ENCODE measurements at regions of chr17 and their contacts with region 1.

Region 1: DNA sequence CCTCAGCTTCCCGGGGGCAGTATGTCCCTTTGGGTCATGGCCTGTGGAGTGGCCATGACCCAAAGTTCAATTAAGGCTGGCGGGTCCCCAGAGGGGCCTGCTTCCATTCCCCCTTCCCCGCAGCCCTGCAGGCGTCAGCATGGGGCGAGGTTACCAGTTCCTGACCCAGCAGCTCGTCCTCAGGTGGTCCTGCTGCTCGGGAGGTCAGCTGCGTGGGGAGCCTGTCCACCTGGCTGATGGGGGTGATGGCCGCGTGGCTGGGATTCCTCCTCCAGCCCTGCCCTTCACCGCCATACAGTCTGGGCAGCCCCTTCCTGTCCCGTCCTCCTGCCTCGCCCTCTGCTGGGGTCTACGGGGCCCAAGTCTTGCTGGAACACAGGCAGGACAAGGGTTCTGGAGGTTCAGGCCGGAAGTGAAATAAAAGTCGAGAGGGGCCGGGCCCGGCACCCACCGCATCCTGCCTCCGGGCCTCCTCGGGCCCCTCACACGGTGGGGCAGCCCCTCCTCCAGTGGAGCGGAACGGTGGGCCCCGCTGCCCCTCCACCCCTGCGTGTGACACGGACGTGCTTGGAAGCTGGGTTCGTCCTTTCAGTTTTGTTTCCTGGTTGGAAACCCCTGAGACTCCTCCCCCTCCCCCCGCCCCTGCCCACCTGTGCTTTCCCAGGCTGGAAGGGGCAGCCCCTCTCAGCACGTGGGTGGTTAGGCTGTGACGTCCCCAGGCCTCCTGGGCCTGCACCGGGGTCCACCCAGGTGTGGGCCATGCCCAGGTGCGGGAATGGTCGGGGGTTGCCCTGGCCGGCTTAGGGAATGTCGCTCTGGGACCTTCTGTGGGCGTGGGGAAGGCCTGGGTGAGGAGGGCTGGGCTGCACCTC is 6.8 kb downstream of the UBALD2 start:
- DNase-seq: peak; percentile 94
- H3K4me3 Mint-ChIP-seq: peak overlapping the region; percentile 85
- H3K27ac Mint-ChIP-seq: peak overlapping the region; percentile 98
- H3K4me1 Mint-ChIP-seq: peaks cover 51% of the 10 kb centered on the region
- H3K27me3 Mint-ChIP-seq: no peaks in the 10 kb centered on the region

Region 2: DNA sequence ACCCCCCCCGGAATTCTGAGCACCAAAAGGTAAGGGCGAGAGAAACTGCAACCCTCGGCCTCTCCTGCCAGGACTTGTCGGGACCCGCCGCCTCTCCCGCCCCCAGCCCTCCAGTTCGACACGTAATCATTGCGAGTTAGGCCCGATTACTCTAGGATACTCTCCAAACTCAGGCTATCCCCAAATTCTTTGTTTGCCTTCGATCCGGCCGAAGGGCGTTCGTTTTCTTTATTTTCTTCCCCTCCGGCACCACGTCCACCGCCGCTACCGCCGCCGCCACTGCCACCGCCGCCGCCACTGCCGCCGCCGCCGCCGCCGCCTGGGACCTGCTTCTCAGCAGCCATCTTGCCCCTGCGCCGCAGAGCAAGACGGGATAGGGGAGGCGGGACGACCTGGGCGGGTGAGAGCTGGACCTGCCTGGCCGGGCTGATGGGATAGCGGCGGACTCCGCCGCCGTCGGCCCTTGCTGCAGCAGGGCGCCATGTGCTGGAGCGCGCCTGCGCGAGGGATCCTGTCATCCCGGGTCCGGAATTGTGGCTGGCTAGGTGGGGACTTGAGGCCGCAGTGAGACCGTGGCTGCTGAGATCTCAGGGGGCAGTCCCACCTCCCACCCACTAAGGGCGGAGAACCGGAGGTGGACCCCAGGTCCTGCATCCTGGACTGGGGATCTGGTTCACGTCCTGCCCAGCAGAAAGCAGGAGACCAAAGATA is 199.6 kb before region 1 on chr17 and contains the start of gene SRP68:
- CTCF ChIA-PET with region 1: interaction called, 3 read pairs
- POLR2A ChIA-PET with region 1: interaction called, 7 read pairs
- intact Hi-C with region 1: loop called (anchors 5 kb)
- DNase-seq: peak; percentile 90
- H3K4me3 Mint-ChIP-seq: peak within 1 kb of the TSS; percentile 99
- H3K27ac Mint-ChIP-seq: peak within 1 kb of the TSS; percentile 100
- H3K4me1 Mint-ChIP-seq: peaks cover 45% of the 10 kb centered on the region
- H3K27me3 Mint-ChIP-seq: peaks cover 27% of the 10 kb centered on the region
- total RNA-seq, gene SRP68: 142 to 148 TPM

Region 3: GRCh38 chr17:76141212-76142038 is 130.5 kb before region 1 on chr17 and contains the start of gene FOXJ1:
- CTCF ChIA-PET with region 1: interaction called, 3 read pairs
- POLR2A ChIA-PET with region 1: interaction called, 24 read pairs
- intact Hi-C with region 1: no loop called
- DNase-seq: peak; percentile 95
- H3K4me3 Mint-ChIP-seq: peak within 1 kb of the TSS; percentile 67
- H3K27ac Mint-ChIP-seq: no peak within 1 kb of the TSS
- H3K4me1 Mint-ChIP-seq: peaks cover 55% of the 10 kb centered on the region
- H3K27me3 Mint-ChIP-seq: peaks cover 8% of the 10 kb centered on the region
- total RNA-seq, gene FOXJ1: 0.22 to 0.29 TPM

Region 4: GRCh38 chr17:76191896-76192295 is 80.0 kb before region 1 on chr17:
- CTCF ChIA-PET with region 1: interaction called, 8 read pairs
- POLR2A ChIA-PET with region 1: interaction called, 298 read pairs
- intact Hi-C with region 1: loop called (anchors 1 kb)
- DNase-seq: peak; percentile 55
- H3K4me3 Mint-ChIP-seq: peak overlapping the region; percentile 61
- H3K27ac Mint-ChIP-seq: peak overlapping the region; percentile 97
- H3K4me1 Mint-ChIP-seq: peaks cover 59% of the 10 kb centered on the region
- H3K27me3 Mint-ChIP-seq: no peaks in the 10 kb centered on the region

Region 5: GRCh38 chr17:76246080-76247066 is 25.5 kb before region 1 on chr17:
- CTCF ChIA-PET with region 1: interaction called, 7 read pairs
- POLR2A ChIA-PET with region 1: interaction called, 49 read pairs
- intact Hi-C with region 1: loop called (anchors 1 kb)
- DNase-seq: peak; percentile 88
- H3K4me3 Mint-ChIP-seq: peak overlapping the region; percentile 52
- H3K27ac Mint-ChIP-seq: peak overlapping the region; percentile 90
- H3K4me1 Mint-ChIP-seq: peaks cover 49% of the 10 kb centered on the region
- H3K27me3 Mint-ChIP-seq: no peaks in the 10 kb centered on the region

Region 6: GRCh38 chr17:76327696-76328095 is 55.8 kb after region 1 on chr17:
- CTCF ChIA-PET with region 1: no interaction called
- POLR2A ChIA-PET with region 1: no interaction called
- intact Hi-C with region 1: no loop called
- DNase-seq: no peak
- H3K4me3 Mint-ChIP-seq: no peak overlapping the region
- H3K27ac Mint-ChIP-seq: no peak overlapping the region
- H3K4me1 Mint-ChIP-seq: no peaks in the 10 kb centered on the region
- H3K27me3 Mint-ChIP-seq: no peaks in the 10 kb centered on the region